ENCODE measurements at regions of chr2 and their contacts with region 1.

Region 1: DNA sequence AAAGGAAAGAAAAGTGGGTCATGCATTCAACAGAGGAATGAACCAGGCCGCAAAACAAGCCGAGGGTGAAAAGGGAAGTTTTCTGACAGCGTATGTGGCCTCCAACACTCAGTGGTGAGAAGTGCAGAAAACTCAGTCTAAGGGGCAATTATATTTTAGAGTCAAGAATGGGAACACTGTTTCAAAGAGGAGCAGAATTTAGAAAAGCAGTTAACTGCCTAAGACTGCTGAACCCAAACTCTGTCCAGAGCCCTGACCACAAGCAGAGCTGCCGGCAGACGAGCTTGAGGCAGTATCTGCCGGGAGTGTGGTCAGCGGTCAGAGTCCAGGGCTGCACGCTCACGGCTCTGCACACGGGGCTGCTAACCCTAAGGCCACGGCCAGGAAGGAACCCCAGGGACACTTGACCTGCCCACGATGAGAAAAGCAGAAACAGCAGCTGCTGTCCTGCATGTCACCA is 347.0 kb upstream of the ID2 start:
- DNase-seq: no peak
- H3K4me3 Mint-ChIP-seq: no peak overlapping the region
- H3K27ac Mint-ChIP-seq: no peak overlapping the region
- H3K4me1 Mint-ChIP-seq: peaks cover 20% of the 10 kb centered on the region
- H3K27me3 Mint-ChIP-seq: no peaks in the 10 kb centered on the region

Region 2: GRCh38 chr2:7845332-7845731 is 489.6 kb before region 1 on chr2:
- CTCF ChIA-PET with region 1: no interaction called
- POLR2A ChIA-PET with region 1: no interaction called
- intact Hi-C with region 1: loop called (anchors 1 kb)
- DNase-seq: no peak
- H3K4me3 Mint-ChIP-seq: no peak overlapping the region
- H3K27ac Mint-ChIP-seq: no peak overlapping the region
- H3K4me1 Mint-ChIP-seq: peaks cover 36% of the 10 kb centered on the region
- H3K27me3 Mint-ChIP-seq: peaks cover 7% of the 10 kb centered on the region

Region 3: DNA sequence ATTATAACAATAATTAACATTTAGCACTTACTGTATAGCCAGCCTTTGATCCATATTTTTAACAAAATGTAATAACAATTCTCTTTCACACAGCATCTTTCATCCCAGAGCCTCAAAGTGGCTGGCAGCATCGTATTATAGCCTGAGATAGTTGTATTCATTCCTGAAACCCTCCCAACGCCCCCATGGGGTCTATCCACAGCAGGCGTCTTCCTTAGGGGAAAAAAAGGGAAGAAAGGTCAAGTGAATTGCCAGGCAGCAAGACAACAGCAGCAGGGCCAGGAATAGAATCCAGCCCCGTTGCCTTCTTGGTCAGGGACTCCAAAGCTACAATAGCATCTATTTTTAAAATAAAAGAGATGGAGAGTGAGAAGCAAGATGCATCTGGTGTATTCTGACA is 77.4 kb before region 1 on chr2:
- CTCF ChIA-PET with region 1: no interaction called
- POLR2A ChIA-PET with region 1: no interaction called
- intact Hi-C with region 1: no loop called
- DNase-seq: no peak
- H3K4me3 Mint-ChIP-seq: no peak overlapping the region
- H3K27ac Mint-ChIP-seq: no peak overlapping the region
- H3K4me1 Mint-ChIP-seq: peaks cover 11% of the 10 kb centered on the region
- H3K27me3 Mint-ChIP-seq: no peaks in the 10 kb centered on the region

Region 4: DNA sequence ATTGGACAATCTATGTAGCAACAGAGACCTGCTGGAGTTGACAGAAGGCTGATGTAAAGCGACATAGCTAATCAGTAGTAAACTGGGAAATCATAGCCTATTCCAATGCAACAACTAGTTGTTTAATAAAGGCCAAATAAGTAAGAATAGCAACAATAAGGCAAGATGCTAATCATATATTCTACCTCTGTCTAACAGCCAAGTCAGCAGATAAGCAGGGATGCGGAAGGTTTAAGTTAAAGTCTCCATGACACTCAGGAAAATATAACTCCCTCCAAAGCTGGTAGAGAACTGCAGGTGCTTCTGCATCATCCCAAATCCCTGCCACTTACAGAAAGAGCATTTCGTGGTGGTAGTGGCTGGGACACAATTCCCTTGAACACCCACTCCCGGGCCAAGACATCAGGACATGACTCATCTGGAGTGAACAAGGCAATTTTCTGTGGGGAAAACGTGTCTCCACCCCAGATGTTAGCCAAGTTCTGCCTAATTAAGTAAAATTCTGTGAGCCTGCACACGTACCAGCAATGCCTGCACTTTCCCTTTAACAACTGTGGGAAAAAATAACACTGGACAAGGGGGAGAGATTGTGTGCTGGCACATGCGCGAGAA is 66.6 kb before region 1 on chr2:
- CTCF ChIA-PET with region 1: no interaction called
- POLR2A ChIA-PET with region 1: no interaction called
- intact Hi-C with region 1: no loop called
- DNase-seq: no peak
- H3K4me3 Mint-ChIP-seq: no peak overlapping the region
- H3K27ac Mint-ChIP-seq: no peak overlapping the region
- H3K4me1 Mint-ChIP-seq: no peaks in the 10 kb centered on the region
- H3K27me3 Mint-ChIP-seq: no peaks in the 10 kb centered on the region

Region 5: GRCh38 chr2:8317418-8317817 is 17.5 kb before region 1 on chr2:
- CTCF ChIA-PET with region 1: no interaction called
- POLR2A ChIA-PET with region 1: no interaction called
- intact Hi-C with region 1: no loop called
- DNase-seq: no peak
- H3K4me3 Mint-ChIP-seq: no peak overlapping the region
- H3K27ac Mint-ChIP-seq: no peak overlapping the region
- H3K4me1 Mint-ChIP-seq: peaks cover 31% of the 10 kb centered on the region
- H3K27me3 Mint-ChIP-seq: no peaks in the 10 kb centered on the region

Region 6: DNA sequence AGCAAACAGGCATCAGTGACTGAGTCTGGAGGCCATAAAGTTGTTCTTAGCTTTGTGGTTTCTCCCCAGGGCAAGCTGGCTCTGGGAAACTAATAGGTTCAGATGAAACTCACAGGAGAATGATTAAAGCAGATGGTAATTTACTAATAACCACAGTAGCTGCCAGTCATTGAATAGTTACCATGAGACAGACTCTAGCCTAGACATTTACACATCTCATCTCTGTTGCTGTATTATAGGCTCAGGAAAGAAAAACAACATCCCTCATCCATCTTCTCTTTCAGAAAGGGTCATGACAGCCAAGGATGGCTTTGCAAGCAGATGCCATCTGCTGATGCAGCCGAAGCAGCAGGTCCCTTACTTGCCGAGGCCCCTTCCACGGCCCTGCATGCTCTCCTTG is 32.9 kb after region 1 on chr2:
- CTCF ChIA-PET with region 1: no interaction called
- POLR2A ChIA-PET with region 1: no interaction called
- intact Hi-C with region 1: no loop called
- DNase-seq: no peak
- H3K4me3 Mint-ChIP-seq: no peak overlapping the region
- H3K27ac Mint-ChIP-seq: no peak overlapping the region
- H3K4me1 Mint-ChIP-seq: no peaks in the 10 kb centered on the region
- H3K27me3 Mint-ChIP-seq: no peaks in the 10 kb centered on the region

Region 7: DNA sequence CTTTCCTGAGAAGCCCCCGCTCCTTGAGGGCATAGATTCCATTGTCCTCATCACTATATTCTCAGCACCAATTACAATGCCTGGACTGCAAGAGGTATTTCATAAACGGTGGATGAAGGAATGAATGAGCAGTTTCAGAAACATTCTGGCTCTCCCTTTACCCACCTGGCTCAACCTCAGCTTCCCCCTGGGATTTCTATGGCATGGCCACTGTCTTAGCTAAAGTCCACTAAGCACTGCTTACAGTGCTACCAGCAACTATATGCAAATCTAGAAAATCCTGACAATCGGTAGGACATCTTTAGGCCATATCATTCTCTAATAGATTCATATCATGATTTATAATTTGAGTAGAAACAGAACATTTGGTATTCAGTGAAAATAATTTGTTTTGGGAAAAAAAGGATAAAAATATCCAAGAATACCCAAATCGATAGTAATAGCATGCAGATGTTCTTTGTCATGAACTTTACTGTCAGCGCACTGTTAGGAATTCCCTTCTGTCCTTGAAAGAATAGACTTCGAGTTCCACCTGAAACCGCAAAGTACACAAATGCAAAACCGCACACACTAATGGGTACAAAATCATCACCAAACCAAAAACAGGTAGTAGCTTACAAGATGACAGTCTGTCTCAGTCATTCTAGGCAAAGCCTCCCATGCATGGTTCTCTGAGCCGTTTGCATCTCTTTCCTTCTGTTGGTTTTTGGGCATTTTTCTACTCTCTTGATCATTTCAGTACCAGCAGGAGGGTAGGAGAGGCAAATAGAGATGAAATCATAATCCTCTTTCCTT is 43.3 kb after region 1 on chr2:
- CTCF ChIA-PET with region 1: no interaction called
- POLR2A ChIA-PET with region 1: interaction called, 3 read pairs
- intact Hi-C with region 1: loop called (anchors 2 kb)
- DNase-seq: peak; percentile 49
- H3K4me3 Mint-ChIP-seq: no peak overlapping the region
- H3K27ac Mint-ChIP-seq: peak overlapping the region; percentile 56
- H3K4me1 Mint-ChIP-seq: peaks cover 38% of the 10 kb centered on the region
- H3K27me3 Mint-ChIP-seq: no peaks in the 10 kb centered on the region

Region 8: DNA sequence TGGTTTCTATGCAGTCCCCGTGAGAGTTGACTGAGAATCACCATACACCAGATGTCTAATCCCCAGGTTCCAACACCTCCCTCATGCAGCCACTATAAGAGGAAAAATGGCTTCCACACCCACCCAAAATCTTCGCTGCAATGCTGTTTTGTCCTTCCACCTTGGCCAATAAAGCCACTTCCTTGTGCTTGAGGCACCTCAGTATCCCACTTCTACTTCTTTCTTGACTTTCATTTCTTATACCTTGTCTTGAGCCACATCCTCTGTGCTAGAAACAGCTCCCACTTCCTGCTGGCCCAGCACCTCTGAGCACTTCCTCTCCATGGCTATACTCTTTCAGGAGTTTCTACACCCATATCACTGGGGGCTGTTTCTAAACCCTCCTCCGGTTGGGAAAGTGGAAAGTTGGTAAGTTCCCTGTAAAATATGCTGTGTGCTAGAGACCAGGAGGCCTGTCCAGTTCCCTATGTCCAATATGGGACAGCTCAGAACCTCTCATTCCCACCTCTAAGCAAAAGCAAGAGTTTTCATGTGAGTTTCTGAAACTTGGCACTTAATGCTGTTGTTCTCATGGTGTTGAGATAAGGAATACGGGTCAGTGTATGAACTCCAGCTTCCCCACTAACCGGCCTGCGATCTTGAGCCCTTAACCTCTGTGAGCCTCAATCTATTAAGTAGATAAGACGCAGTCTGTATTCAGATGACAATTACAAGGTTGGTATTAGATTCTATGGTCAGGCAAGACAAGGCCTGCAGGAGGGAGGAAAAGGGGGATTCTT is 137.8 kb after region 1 on chr2:
- CTCF ChIA-PET with region 1: no interaction called
- POLR2A ChIA-PET with region 1: no interaction called
- intact Hi-C with region 1: loop called (anchors 1 kb)
- DNase-seq: peak; percentile 53
- H3K4me3 Mint-ChIP-seq: no peak overlapping the region
- H3K27ac Mint-ChIP-seq: peak overlapping the region; percentile 83
- H3K4me1 Mint-ChIP-seq: peaks cover 78% of the 10 kb centered on the region
- H3K27me3 Mint-ChIP-seq: no peaks in the 10 kb centered on the region

Measured in activated CD4-positive, alpha-beta memory T cell treated with anti-CD3 and anti-CD28 coated beads for 36 hours (primary cell).